ENCODE measurements at regions of chr2 and their contacts with region 1.

Region 1: DNA sequence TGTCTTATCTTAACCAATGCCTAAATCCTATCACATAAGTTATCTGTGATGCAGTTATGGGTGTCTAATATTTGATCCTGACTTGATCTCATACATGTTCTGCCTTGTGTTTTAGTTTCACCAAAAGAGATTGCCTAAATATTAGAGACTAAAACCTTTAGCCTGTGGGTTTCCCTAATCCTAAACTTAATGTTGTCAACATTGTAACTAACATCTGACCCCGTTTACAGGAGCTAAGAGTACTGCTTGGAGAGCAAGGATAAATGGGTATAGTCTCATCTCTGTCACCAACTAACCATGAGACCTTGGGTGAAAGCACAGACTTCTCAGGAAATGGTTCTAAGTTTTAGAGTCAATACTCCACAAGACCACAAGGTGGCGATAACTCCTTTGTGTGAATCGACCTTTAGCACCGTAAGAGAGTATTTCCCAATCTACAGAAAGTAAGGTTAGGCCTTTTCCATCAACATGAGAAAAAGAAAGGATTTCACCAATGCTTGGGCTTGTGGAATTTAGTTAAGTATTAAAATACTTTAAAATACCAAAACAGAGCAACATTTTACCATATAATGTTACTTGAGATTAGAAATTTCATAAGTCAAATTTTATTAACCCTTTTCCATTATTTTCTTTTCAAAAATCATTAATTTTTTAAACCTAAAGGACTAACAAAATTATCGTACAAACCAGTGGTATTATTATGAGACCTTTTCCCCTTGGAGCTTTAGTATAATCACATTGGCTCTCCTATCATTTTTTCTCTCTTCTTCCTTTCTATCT is 60.5 kb downstream of the G6PC2 start:
- DNase-seq: no peak

Region 2: DNA sequence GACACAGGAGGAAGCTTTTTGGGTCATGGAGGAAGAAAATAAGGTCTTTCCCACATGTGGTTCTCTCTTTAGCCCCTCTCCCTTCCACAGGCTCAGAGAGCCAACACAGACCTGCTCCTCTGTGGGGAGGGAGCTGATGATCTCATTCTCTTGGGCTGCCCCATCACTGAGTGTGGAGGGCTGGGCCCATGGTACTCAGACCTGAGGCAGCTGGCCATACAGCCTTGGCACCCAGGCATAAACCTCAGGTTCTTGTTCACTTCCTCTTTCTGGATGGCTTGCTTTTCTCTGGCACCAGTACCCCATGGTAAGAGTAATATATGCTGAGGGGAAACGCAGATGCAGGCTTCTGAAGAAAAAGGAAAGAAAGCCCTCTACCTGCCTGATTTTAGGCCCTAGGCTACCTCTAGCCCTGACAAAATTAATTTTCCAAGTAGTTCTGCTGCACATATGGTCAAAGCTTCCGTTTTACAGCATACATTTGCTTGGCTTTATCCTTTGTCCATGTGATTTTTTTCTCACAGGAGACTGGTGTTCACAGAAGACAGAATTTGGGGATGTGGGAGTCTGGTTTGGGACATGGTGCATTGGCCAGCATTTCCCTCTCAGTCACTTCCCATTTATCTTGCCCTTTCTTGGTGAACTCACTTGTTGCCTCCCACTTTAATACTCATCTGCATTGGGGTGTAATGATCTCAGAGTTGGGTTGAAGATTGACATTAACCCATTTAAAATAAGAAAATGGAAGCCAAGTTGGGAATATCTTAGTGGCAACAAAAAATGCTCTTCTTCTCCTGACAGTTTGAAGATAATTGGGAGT is 118.8 kb after region 1 on chr2:
- intact Hi-C with region 1: loop called (anchors 5 kb)
- DNase-seq: no peak

Region 3: GRCh38 chr2:169141713-169142352 is 180.2 kb after region 1 on chr2:
- intact Hi-C with region 1: loop called (anchors 1 kb)
- DNase-seq: peak; percentile 76

Region 4: GRCh38 chr2:169397697-169398096 is 436.1 kb after region 1 on chr2:
- intact Hi-C with region 1: loop called (anchors 10 kb)
- DNase-seq: no peak